Pancreas (tissue), 10 donors: ENCODE measurements at regions of chr6 and their contacts with region 1.

Region 1: GRCh38 chr6:53926525-53926924 is 131.7 kb downstream of the LRRC1 start:
- DNase-seq: no peak
- ATAC-seq: peak in 2 of 4 donors; percentile 15 to 42
- H3K4me3 ChIP-seq: no peak overlapping the region
- H3K27ac ChIP-seq: peak overlapping the region in 1 of 4 donors; percentile 16
- H3K4me1 ChIP-seq: peaks cover 0 to 12% (median 5%) of the 10 kb centered on the region in 3 donors
- H3K27me3 ChIP-seq: no peaks in the 10 kb centered on the region
- CTCF ChIP-seq: no peak

Region 2: GRCh38 chr6:53811082-53811481 is 115.4 kb before region 1 on chr6:
- intact Hi-C with region 1: loop called in 1 of 3 experiments (anchors 10 kb)
- DNase-seq: peak; percentile 58 to 68 (median 65)
- ATAC-seq: peak; percentile 91 to 97 (median 96)
- H3K4me3 ChIP-seq: no peak overlapping the region
- H3K27ac ChIP-seq: peak overlapping the region in 2 of 4 donors; percentile 24 to 57
- H3K4me1 ChIP-seq: peaks cover 0 to 10% (median 8%) of the 10 kb centered on the region in 3 donors
- H3K27me3 ChIP-seq: no peaks in the 10 kb centered on the region
- CTCF ChIP-seq: no peak

Region 3: GRCh38 chr6:53943395-53943794 is 16.9 kb after region 1 on chr6:
- intact Hi-C with region 1: no loop called
- DNase-seq: no peak
- ATAC-seq: no peak
- H3K4me3 ChIP-seq: no peak overlapping the region
- H3K27ac ChIP-seq: no peak overlapping the region
- H3K4me1 ChIP-seq: no peaks in the 10 kb centered on the region
- H3K27me3 ChIP-seq: no peaks in the 10 kb centered on the region
- CTCF ChIP-seq: no peak

Region 4: DNA sequence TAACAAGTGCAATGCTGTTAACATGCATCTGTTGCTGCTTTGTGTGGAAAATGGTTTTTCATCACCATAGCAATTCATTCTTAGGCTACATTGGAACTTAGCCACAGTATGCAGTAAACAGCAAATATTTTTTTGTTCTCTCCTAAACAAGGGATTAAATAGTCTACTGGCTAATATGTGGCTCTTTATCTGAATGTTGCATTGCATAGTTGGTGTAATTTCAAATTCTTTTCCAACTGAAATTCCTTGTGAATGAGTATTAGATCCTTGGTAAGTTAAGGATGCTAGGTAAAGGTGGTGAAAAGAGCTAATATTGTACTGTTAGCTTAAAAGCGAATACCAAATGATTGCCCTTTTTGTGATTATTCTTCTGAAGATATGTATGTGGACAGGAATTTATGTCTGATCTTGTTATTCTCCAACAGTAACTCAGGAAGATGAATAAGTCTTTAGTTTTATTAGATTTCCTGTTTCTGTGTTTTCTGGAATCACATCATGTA is 185.7 kb after region 1 on chr6:
- intact Hi-C with region 1: no loop called
- DNase-seq: no peak
- ATAC-seq: no peak
- H3K4me3 ChIP-seq: no peak overlapping the region
- H3K27ac ChIP-seq: no peak overlapping the region
- H3K4me1 ChIP-seq: no peaks in the 10 kb centered on the region
- H3K27me3 ChIP-seq: no peaks in the 10 kb centered on the region
- CTCF ChIP-seq: no peak